ENCODE measurements at regions of chr3 and their contacts with region 1.

Region 1: GRCh38 chr3:176041819-176042211 is 1155.5 kb downstream of the TBL1XR1 start:
- DNase-seq: no peak
- H3K4me3 ChIP-seq: no peak overlapping the region
- CTCF ChIP-seq: no peak
- POLR2A ChIP-seq: no peak

Region 2: DNA sequence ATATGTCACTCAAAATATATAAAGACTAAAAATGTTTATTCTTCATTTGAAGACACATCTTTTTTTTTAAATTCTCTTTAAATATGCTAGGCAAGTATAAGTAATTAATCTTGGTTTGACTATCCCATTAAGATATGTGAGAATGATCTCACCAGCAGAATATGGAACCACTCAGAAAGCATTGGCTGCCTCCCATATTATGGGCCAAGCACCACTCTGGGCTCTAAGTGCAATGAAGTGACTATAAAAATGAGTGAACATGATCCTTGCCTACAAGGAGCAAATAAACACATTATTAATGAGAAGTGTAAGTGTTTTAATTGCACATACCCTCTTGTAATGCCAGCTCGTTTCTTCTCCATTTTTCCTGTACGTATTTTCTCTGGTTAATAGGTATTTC is 854.2 kb before region 1 on chr3:
- intact Hi-C with region 1: loop called (anchors 5 kb)
- DNase-seq: no peak
- H3K4me3 ChIP-seq: no peak overlapping the region
- CTCF ChIP-seq: no peak
- POLR2A ChIP-seq: no peak

Region 3: GRCh38 chr3:175898194-175898593 is 143.6 kb before region 1 on chr3:
- intact Hi-C with region 1: no loop called
- DNase-seq: no peak
- H3K4me3 ChIP-seq: no peak overlapping the region
- CTCF ChIP-seq: no peak
- POLR2A ChIP-seq: no peak

Region 4: GRCh38 chr3:176005564-176005963 is 36.3 kb before region 1 on chr3:
- intact Hi-C with region 1: no loop called
- DNase-seq: no peak
- H3K4me3 ChIP-seq: no peak overlapping the region
- CTCF ChIP-seq: no peak
- POLR2A ChIP-seq: no peak